Activated naive CD4-positive, alpha-beta T cell treated with anti-CD3 and anti-CD28 coated beads, Interleukin-2, amount 10 ng/mL, durations not matched to agents 7 days and 5 days (primary cell): ENCODE measurements at regions of chr15 and their contacts with region 1.

Region 1: DNA sequence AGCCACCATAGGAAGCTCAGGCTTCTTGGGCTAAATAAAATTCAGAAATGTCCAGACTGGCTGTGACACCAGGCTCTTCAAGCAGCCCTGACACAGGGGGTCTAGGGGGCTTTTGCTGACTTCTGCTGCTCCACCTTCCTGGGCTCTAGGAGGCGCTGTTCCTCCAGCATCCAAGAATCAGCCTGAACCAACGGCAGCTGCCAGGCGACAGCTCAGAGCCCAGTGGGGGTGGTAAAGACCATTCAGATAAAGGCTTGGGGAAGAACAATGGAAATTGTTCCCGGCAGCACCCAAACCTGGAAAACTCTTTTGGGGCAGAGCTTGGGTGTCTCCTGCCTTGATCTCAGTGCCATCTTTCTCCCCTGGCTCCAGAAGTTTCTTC is 21.6 kb upstream of the PSTPIP1 start:
- DNase-seq: peak; percentile 78
- H3K4me3 Mint-ChIP-seq: no peak overlapping the region
- H3K27ac Mint-ChIP-seq: no peak overlapping the region
- H3K4me1 Mint-ChIP-seq: peaks cover 25% of the 10 kb centered on the region
- H3K27me3 Mint-ChIP-seq: peaks cover 22% of the 10 kb centered on the region

Region 2: GRCh38 chr15:76756381-76756780 is 217.0 kb before region 1 on chr15:
- CTCF ChIA-PET with region 1: no interaction called
- DNase-seq: no peak
- H3K4me3 Mint-ChIP-seq: no peak overlapping the region
- H3K27ac Mint-ChIP-seq: no peak overlapping the region
- H3K4me1 Mint-ChIP-seq: no peaks in the 10 kb centered on the region
- H3K27me3 Mint-ChIP-seq: no peaks in the 10 kb centered on the region

Region 3: DNA sequence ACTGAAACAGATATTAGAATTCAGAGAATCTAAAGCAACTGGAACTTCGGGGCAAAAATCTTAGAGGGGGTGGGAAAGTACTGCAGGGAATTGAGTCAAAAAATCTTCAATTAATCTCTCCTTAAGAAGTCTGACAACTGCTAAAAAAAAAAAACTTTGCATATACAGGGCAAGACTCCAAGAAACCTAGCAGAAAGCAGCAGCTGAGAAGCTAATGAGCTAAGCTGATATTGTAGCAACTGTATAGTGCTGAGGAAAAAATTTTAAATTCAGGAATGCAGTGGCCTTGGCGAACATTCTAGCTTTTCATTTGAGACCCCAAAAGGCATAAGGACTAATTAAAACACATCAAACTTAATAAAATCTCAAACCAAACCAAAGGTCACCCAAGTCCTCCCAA is 181.8 kb before region 1 on chr15:
- CTCF ChIA-PET with region 1: no interaction called
- DNase-seq: no peak
- H3K4me3 Mint-ChIP-seq: no peak overlapping the region
- H3K27ac Mint-ChIP-seq: no peak overlapping the region
- H3K4me1 Mint-ChIP-seq: no peaks in the 10 kb centered on the region
- H3K27me3 Mint-ChIP-seq: no peaks in the 10 kb centered on the region

Region 4: GRCh38 chr15:76994971-76995945 is 21.9 kb after region 1 on chr15 and contains the start of gene PSTPIP1:
- CTCF ChIA-PET with region 1: interaction called, 62 read pairs
- DNase-seq: peak; percentile 84
- H3K4me3 Mint-ChIP-seq: peak within 1 kb of the TSS; percentile 94
- H3K27ac Mint-ChIP-seq: peak within 1 kb of the TSS; percentile 95
- H3K4me1 Mint-ChIP-seq: peaks cover 73% of the 10 kb centered on the region
- H3K27me3 Mint-ChIP-seq: no peaks in the 10 kb centered on the region

Region 5: DNA sequence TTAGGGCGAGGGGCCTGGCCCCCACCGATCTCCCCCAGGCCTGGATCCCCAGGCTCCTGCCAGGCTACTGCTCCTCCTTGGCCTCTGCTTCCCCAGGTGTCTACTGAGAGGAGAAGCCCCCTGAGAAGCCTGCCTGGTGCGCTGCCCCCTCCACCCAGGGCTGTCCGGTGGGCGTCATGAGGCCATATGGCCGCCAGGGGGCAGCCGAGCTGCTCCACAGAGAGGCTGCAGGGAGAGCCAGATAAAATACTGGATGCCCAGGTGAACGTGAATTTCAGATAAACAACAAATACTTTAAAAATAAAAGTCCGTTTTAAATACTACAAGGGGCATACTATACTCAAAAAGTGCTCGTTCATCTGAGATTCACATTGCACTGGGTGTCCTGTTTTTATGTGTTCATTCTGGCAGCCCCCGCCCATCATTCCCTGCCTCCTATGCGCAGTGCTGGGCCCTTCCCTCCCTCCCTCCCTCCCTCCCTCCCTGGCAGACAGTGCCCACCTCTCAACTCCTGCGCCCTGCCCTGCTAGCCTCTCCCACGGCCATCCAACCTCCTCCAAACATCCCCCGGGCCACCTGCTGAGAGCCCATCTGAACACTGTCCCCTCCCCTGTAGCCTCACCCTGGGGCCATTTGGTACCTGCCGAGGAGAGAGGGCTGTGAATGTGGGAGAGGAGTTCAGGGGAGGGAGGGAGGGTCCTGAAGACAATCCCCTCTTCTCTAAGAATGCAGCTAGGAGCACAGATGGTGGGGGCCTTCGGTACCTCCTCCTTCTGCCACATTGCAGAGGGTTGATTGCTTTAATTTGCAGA is 51.1 kb after region 1 on chr15:
- CTCF ChIA-PET with region 1: interaction called, 103 read pairs
- DNase-seq: peak; percentile 73
- H3K4me3 Mint-ChIP-seq: no peak overlapping the region
- H3K27ac Mint-ChIP-seq: peak overlapping the region; percentile 73
- H3K4me1 Mint-ChIP-seq: peaks cover 53% of the 10 kb centered on the region
- H3K27me3 Mint-ChIP-seq: no peaks in the 10 kb centered on the region

Region 6: DNA sequence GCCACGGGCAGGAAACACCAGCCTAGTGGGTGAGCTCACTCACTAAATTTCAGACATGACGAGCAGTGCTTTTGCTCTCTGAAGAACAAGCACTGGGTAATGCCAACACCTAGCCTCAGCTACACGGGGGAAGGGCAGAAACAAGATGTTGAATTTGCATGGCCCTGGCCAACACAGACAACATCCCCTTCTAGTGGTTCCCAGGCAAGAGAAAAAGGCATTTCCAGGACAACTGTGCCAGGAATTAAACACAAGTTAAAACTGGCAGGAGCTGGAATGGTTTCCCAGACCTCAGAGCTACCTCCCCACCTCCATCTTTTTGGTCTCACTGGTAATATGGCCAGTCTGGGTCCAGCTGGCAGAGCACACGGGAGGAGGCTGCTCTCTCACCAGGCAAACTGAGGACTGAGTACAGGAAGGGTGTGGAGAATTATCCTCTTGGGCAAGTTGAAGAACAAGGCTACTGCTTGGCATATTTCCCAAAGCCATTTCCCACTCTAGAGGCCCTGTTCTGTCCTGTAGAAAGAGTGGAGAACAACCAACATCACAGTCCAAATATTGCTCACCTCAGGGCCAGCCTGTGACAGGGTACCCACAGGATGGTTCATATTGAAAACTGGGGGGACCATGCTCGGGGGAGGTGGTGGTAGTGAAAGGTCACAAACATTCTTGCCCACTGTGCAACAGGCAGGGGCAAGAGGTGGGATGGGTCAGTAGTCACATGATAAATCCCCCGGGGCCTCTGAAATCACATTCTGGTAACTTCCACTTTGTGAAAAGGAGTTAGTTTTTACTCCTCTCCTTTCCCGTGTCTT is 71.1 kb after region 1 on chr15:
- CTCF ChIA-PET with region 1: interaction called, 17 read pairs
- DNase-seq: no peak
- H3K4me3 Mint-ChIP-seq: no peak overlapping the region
- H3K27ac Mint-ChIP-seq: peak overlapping the region; percentile 6
- H3K4me1 Mint-ChIP-seq: peaks cover 3% of the 10 kb centered on the region
- H3K27me3 Mint-ChIP-seq: no peaks in the 10 kb centered on the region

Region 7: DNA sequence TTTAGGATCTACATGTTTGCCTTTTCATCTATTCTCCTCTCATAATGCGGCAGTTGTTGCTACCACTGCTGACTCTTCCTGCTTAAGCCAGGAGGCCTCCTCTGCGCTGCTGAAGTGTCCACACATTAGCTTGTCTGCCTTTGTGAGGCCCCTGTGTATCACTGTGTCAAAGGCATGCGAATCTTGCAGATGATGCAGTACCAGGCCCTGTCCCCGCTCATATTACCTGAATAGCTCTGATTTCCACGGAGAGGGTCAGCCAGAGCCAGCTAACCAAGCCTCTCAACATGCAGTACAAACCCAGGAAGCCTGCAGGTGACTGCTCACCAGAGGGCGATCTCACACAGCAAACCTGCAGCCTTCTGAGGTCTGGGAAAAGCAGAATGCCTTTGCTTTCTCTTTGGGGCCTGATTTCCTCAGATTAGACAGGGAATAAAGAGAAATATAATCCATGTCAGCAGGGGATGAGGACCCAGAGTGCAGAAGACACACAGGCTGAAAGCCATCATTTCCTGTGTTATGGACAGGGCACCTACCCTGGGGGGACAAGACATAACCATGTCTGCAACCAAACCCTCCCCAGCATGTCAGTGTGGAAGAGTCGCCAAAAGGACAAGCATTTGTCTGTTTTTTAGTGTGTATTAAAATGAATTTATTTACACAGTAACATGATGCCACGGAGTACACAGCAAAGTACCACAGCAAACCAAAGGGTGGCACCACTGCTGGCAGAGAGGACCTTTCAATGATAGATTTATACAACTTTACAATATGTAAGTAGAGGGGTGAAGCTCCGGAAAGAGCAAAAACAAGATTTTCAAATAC is 134.4 kb after region 1 on chr15:
- CTCF ChIA-PET with region 1: interaction called, 21 read pairs
- DNase-seq: peak; percentile 65
- H3K4me3 Mint-ChIP-seq: no peak overlapping the region
- H3K27ac Mint-ChIP-seq: no peak overlapping the region
- H3K4me1 Mint-ChIP-seq: no peaks in the 10 kb centered on the region
- H3K27me3 Mint-ChIP-seq: peaks cover 5% of the 10 kb centered on the region

Region 8: GRCh38 chr15:77201665-77202064 is 228.3 kb after region 1 on chr15:
- CTCF ChIA-PET with region 1: no interaction called
- DNase-seq: no peak
- H3K4me3 Mint-ChIP-seq: no peak overlapping the region
- H3K27ac Mint-ChIP-seq: no peak overlapping the region
- H3K4me1 Mint-ChIP-seq: no peaks in the 10 kb centered on the region
- H3K27me3 Mint-ChIP-seq: no peaks in the 10 kb centered on the region

Region 9: GRCh38 chr15:77496710-77497103 is 523.4 kb after region 1 on chr15:
- CTCF ChIA-PET with region 1: interaction called, 12 read pairs
- DNase-seq: peak; percentile 81
- H3K4me3 Mint-ChIP-seq: no peak overlapping the region
- H3K27ac Mint-ChIP-seq: no peak overlapping the region
- H3K4me1 Mint-ChIP-seq: peaks cover 9% of the 10 kb centered on the region
- H3K27me3 Mint-ChIP-seq: no peaks in the 10 kb centered on the region